MCF 10A (cell line): ENCODE measurements at regions of chr15 and their contacts with region 1.

Region 1: GRCh38 chr15:94412979-94413746 is 181.8 kb downstream of the MCTP2 start:
- DNase-seq: peak; percentile 36
- H3K4me3 Mint-ChIP-seq: no peak overlapping the region
- H3K27ac Mint-ChIP-seq: no peak overlapping the region
- H3K4me1 Mint-ChIP-seq: no peaks in the 10 kb centered on the region
- H3K27me3 Mint-ChIP-seq: no peaks in the 10 kb centered on the region
- CTCF ChIP-seq: peak; percentile 52

Region 2: DNA sequence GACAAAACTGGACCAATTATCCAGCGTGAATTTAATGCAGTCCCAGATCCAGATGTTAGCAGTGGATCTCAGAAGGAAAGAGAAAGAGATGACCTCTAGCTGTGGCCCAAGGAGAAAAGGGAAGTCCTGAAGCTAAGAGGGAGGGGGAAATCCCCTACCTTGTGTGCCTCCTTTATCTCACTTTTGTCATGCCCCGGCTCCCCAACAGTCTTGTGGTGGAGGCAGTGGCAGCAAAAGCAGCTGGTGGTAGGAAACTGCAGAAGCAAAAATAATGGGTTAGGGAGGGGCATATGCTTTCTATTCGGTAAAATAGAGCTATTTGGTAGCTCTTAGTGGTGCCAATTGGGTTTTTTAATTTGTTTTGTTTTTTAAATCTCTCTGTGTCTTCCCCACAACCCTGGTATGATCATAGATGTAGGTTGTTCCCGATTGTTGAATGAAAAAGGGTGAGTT is 125.3 kb before region 1 on chr15:
- CTCF ChIA-PET with region 1: no interaction called
- POLR2A ChIA-PET with region 1: no interaction called
- intact Hi-C with region 1: no loop called
- DNase-seq: no peak
- H3K4me3 Mint-ChIP-seq: no peak overlapping the region
- H3K27ac Mint-ChIP-seq: no peak overlapping the region
- H3K4me1 Mint-ChIP-seq: peaks cover 3% of the 10 kb centered on the region
- H3K27me3 Mint-ChIP-seq: no peaks in the 10 kb centered on the region
- CTCF ChIP-seq: no peak

Region 3: DNA sequence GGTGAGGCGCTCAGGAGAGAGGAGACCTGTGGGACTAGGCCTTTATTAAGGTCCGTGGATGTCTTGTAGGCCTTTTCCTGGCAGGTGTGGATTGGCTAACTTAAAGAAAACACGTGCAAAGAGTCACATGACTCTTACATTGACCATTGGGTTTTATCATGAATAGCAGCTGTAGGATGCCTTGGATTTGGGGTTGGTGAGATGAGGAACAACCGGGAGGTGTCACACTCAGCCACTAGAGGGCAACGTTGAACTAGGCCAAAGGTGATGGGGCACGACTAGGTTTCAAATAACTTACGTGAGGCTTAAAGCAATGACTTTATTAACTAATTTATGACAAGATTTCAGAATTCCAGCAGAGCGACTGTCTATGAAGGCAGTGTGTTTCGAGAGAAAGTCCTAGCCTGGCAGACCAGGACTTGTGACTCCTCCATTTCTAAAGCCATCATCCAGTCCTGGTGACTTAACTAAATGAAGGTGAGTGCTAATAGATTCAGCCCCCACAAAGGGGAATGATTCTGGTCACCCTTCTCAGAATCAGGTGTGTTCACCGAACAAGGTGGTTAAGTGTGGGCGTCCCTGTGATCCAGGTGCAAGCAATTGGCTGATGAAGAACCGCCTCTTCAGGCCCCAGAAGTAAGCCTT is 163.8 kb after region 1 on chr15:
- CTCF ChIA-PET with region 1: interaction called, 7 read pairs
- POLR2A ChIA-PET with region 1: no interaction called
- intact Hi-C with region 1: loop called (anchors 1 kb)
- DNase-seq: peak; percentile 72
- H3K4me3 Mint-ChIP-seq: no peak overlapping the region
- H3K27ac Mint-ChIP-seq: no peak overlapping the region
- H3K4me1 Mint-ChIP-seq: peaks cover 5% of the 10 kb centered on the region
- H3K27me3 Mint-ChIP-seq: no peaks in the 10 kb centered on the region
- CTCF ChIP-seq: peak; percentile 58